ENCODE measurements at regions of chr18 and their contacts with region 1.

Region 1: DNA sequence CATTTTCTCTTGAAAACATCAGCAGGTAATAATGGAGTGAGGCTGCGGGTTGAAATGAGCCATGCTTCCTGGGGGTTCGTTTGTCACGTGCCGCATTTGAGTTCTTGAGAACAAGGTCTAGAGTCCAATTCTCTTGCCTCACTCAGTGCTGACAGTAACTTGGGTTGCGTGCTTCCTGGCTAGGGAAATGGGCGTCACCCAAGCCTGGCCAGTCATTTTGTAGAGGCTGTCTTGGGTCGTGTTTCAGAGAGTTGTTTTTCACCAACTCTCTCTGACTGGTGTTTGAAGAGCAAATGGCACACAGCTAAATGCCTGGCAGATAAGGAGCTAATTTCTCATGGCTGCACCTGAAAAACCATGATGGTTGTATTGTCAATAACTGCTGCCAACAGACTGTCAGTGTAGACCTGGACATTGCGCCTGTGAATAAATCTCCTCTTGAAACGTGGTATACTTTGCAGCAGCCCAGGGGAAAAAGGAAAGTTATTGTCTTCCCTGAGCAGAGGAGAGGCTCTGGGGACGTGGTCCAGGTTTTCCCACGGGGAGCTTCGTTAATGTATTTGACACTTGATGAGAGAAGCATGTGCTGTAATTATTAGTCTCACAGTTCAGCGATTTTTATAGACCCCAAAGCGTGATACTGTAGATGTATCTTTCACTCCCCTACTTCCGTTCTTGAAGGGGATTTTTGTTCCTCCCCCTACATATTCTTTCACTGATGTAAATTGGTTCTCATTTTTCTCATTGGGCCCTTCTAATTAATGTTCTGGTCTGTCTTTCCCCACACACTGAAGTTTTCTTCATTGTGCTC is 196.0 kb downstream of the FHOD3 start:
- DNase-seq: no peak
- ATAC-seq: peak; percentile 81
- H3K4me3 ChIP-seq: no peak overlapping the region
- H3K27ac ChIP-seq: no peak overlapping the region
- H3K4me1 ChIP-seq: peaks cover 7% of the 10 kb centered on the region
- H3K27me3 ChIP-seq: no peaks in the 10 kb centered on the region
- CTCF ChIP-seq: no peak
- EP300 ChIP-seq: no peak; a peak in 1 of 4 replicates
- POLR2A ChIP-seq: no peak
- RAD21 ChIP-seq: no peak

Region 2: DNA sequence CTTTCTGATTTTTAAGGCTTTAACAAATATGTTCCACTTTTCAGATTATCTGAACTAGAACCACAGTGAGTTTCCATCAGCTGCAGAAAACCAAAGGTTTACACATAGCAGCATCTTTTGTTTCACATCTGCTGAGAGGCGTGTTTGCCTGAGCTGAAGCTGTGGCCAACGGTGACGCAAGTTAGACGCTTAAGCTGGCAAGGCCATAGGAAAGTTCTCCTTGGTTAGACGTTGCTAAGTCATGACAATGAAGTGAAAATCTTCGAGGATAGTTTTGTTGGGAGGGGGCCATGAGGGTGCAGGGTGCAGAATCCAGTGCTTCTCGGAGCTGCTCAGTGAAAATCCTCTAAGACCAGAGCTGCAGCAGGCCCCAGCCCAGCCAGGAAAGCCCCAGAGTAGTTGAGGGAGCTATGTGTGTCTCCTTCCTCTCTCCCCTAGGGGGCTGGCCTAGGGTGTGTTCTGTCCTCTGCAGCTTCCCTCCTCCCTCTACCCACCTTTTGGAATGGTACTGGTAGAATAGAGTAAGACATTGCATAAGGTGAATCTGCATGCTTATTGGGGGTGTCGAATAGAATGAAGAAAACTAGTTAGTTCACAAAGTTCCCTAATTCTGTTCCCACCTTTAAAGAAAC is 90.7 kb before region 1 on chr18:
- CTCF ChIA-PET with region 1: interaction called, 3 read pairs
- POLR2A ChIA-PET with region 1: interaction called, 3 read pairs
- RAD21 ChIA-PET with region 1: interaction called, 10 read pairs
- SMC1A ChIA-PET with region 1: interaction called, 4 read pairs
- in situ Hi-C with region 1: no loop called
- intact Hi-C with region 1: no loop called
- DNase-seq: no peak
- ATAC-seq: peak; percentile 70
- H3K4me3 ChIP-seq: no peak overlapping the region
- H3K27ac ChIP-seq: no peak overlapping the region
- H3K4me1 ChIP-seq: no peaks in the 10 kb centered on the region
- H3K27me3 ChIP-seq: no peaks in the 10 kb centered on the region
- CTCF ChIP-seq: peak in 2 of 3 experiments; percentile 3 to 25; a peak in 3 of 6 replicates
- EP300 ChIP-seq: no peak
- POLR2A ChIP-seq: no peak
- RAD21 ChIP-seq: no peak

Region 3: GRCh38 chr18:36451454-36452251 is 41.9 kb before region 1 on chr18:
- CTCF ChIA-PET with region 1: interaction called, 3 read pairs
- POLR2A ChIA-PET with region 1: interaction called, 3 read pairs
- RAD21 ChIA-PET with region 1: interaction called, 10 read pairs
- SMC1A ChIA-PET with region 1: interaction called, 3 read pairs
- in situ Hi-C with region 1: no loop called
- intact Hi-C with region 1: no loop called
- DNase-seq: no peak
- ATAC-seq: peak; percentile 5; the same call in 2 of the 3 replicates
- H3K4me3 ChIP-seq: no peak overlapping the region
- H3K27ac ChIP-seq: no peak overlapping the region
- H3K4me1 ChIP-seq: no peaks in the 10 kb centered on the region; the same call in 1 of the 2 replicates
- H3K27me3 ChIP-seq: no peaks in the 10 kb centered on the region
- CTCF ChIP-seq: no peak
- EP300 ChIP-seq: no peak
- POLR2A ChIP-seq: no peak
- RAD21 ChIP-seq: no peak

Region 4: DNA sequence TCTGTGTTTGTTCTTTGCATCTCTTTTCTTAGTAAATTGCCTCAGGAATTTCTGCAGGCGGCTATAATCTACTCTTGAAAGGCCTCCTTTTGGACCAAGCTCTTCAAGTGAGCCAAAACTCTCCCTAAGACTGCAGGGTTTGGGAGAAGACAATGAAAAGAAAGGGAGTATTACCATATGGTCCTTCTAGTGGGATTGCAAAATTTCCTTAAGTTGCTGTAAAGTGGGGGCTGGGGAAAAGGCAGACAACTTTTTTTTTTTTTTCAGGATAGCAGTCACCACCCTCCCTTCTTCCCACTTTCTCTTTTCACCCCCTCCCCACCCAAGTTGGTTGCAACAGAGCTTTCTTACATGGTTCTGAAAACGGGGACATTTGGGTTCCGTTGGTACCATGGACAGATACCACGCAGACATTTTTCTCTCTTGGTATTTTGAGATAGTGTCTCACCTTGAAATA is 12.3 kb before region 1 on chr18:
- CTCF ChIA-PET with region 1: interaction called, 4 read pairs
- POLR2A ChIA-PET with region 1: interaction called, 11 read pairs
- RAD21 ChIA-PET with region 1: interaction called, 3 read pairs
- SMC1A ChIA-PET with region 1: interaction called, 11 read pairs
- in situ Hi-C with region 1: no loop called
- intact Hi-C with region 1: no loop called
- DNase-seq: no peak
- ATAC-seq: no peak
- H3K4me3 ChIP-seq: no peak overlapping the region
- H3K27ac ChIP-seq: no peak overlapping the region
- H3K4me1 ChIP-seq: no peaks in the 10 kb centered on the region
- H3K27me3 ChIP-seq: no peaks in the 10 kb centered on the region
- CTCF ChIP-seq: no peak
- EP300 ChIP-seq: no peak
- POLR2A ChIP-seq: no peak
- RAD21 ChIP-seq: no peak

Region 5: DNA sequence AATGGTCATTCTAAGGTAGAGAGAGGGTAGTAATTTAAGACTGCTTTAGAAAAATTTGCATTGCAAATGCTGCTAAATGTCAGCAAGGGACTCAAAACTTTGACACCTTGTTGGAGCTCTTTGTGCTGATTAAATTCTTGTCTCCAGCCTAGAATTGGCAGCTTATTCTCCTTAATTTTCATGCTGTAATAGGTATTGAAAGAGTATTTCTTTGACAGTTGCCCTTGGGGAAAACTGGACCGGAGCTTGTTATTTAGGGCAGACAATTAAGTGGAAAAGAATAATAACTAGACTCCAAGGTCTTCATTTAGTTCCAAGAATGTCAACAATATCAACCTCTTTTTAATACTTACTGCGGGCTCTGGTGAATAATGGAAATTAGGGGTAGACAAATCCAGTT is 71.3 kb after region 1 on chr18:
- CTCF ChIA-PET with region 1: no interaction called
- POLR2A ChIA-PET with region 1: no interaction called
- RAD21 ChIA-PET with region 1: interaction called, 4 read pairs
- SMC1A ChIA-PET with region 1: interaction called, 14 read pairs
- in situ Hi-C with region 1: no loop called
- intact Hi-C with region 1: no loop called
- DNase-seq: no peak
- ATAC-seq: no peak
- H3K4me3 ChIP-seq: no peak overlapping the region
- H3K27ac ChIP-seq: no peak overlapping the region
- H3K4me1 ChIP-seq: no peaks in the 10 kb centered on the region
- H3K27me3 ChIP-seq: no peaks in the 10 kb centered on the region
- CTCF ChIP-seq: no peak
- EP300 ChIP-seq: no peak
- POLR2A ChIP-seq: no peak
- RAD21 ChIP-seq: no peak